WTC11 (cell line): ENCODE measurements at regions of chr2 and their contacts with region 1.

Region 1: GRCh38 chr2:100730346-100730745 is 89.6 kb upstream of the NPAS2 start:
- DNase-seq: peak; percentile 72
- ATAC-seq: peak; percentile 61
- H3K4me3 Mint-ChIP-seq: no peak overlapping the region
- H3K27ac Mint-ChIP-seq: no peak overlapping the region
- H3K4me1 Mint-ChIP-seq: peaks cover 26% of the 10 kb centered on the region
- H3K27me3 Mint-ChIP-seq: peaks cover 3% of the 10 kb centered on the region
- CTCF ChIP-seq: 0 out of 2 replicates have a peak, but pooled peaks have one; percentile 34

Region 2: GRCh38 chr2:100713106-100713505 is 17.2 kb before region 1 on chr2:
- CTCF ChIA-PET with region 1: no interaction called
- POLR2A ChIA-PET with region 1: no interaction called
- DNase-seq: no peak
- ATAC-seq: no peak
- H3K4me3 Mint-ChIP-seq: no peak overlapping the region
- H3K27ac Mint-ChIP-seq: no peak overlapping the region
- H3K4me1 Mint-ChIP-seq: no peaks in the 10 kb centered on the region
- H3K27me3 Mint-ChIP-seq: no peaks in the 10 kb centered on the region
- CTCF ChIP-seq: no peak

Region 3: GRCh38 chr2:100761365-100761764 is 31.0 kb after region 1 on chr2:
- CTCF ChIA-PET with region 1: no interaction called
- POLR2A ChIA-PET with region 1: no interaction called
- DNase-seq: no peak
- ATAC-seq: no peak
- H3K4me3 Mint-ChIP-seq: no peak overlapping the region
- H3K27ac Mint-ChIP-seq: no peak overlapping the region
- H3K4me1 Mint-ChIP-seq: no peaks in the 10 kb centered on the region
- H3K27me3 Mint-ChIP-seq: no peaks in the 10 kb centered on the region
- CTCF ChIP-seq: no peak

Region 4: GRCh38 chr2:100802066-100802465 is 71.7 kb after region 1 on chr2:
- CTCF ChIA-PET with region 1: no interaction called
- POLR2A ChIA-PET with region 1: no interaction called
- DNase-seq: no peak
- ATAC-seq: no peak
- H3K4me3 Mint-ChIP-seq: no peak overlapping the region
- H3K27ac Mint-ChIP-seq: no peak overlapping the region
- H3K4me1 Mint-ChIP-seq: peaks cover 8% of the 10 kb centered on the region
- H3K27me3 Mint-ChIP-seq: no peaks in the 10 kb centered on the region
- CTCF ChIP-seq: no peak

Region 5: DNA sequence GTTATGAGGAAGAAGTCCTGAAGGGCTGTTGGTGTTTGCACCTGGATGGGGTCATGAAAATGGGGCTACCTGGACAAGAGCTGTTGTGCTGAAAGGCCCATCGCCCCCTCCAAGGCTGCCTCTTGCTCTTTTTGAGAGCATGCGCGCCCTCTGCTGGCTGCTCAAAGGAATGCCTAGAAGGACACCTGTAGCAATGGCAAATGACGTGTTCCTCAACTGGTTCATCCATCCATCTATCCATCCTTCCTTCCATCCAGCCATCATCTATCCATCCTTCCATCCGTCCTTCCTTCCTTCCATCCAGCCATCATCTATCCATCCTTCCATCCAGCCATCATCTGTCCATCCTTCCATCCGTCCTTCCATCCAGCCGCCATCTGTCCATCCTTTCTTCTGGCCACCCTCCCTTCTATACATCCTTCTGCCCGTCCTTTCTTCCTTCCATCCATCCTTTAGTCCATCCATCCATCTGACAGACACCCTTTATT is 254.6 kb after region 1 on chr2:
- CTCF ChIA-PET with region 1: interaction called, 19 read pairs
- POLR2A ChIA-PET with region 1: no interaction called
- DNase-seq: peak; percentile 86
- ATAC-seq: peak; percentile 76
- H3K4me3 Mint-ChIP-seq: no peak overlapping the region
- H3K27ac Mint-ChIP-seq: no peak overlapping the region
- H3K4me1 Mint-ChIP-seq: peaks cover 25% of the 10 kb centered on the region
- H3K27me3 Mint-ChIP-seq: no peaks in the 10 kb centered on the region
- CTCF ChIP-seq: peak; percentile 94